ENCODE measurements at regions of chr19 and their contacts with region 1.

Region 1: GRCh38 chr19:14006243-14006765 is at the start of gene RFX1:
- DNase-seq: peak; percentile 100
- H3K4me3 Mint-ChIP-seq: peak within 1 kb of the TSS; percentile 96
- H3K27ac Mint-ChIP-seq: peak within 1 kb of the TSS; percentile 100
- H3K4me1 Mint-ChIP-seq: peaks cover 39% of the 10 kb centered on the region
- H3K27me3 Mint-ChIP-seq: no peaks in the 10 kb centered on the region
- total RNA-seq, gene RFX1: 17.0 and 18.0 TPM in 2 replicates

Region 2: DNA sequence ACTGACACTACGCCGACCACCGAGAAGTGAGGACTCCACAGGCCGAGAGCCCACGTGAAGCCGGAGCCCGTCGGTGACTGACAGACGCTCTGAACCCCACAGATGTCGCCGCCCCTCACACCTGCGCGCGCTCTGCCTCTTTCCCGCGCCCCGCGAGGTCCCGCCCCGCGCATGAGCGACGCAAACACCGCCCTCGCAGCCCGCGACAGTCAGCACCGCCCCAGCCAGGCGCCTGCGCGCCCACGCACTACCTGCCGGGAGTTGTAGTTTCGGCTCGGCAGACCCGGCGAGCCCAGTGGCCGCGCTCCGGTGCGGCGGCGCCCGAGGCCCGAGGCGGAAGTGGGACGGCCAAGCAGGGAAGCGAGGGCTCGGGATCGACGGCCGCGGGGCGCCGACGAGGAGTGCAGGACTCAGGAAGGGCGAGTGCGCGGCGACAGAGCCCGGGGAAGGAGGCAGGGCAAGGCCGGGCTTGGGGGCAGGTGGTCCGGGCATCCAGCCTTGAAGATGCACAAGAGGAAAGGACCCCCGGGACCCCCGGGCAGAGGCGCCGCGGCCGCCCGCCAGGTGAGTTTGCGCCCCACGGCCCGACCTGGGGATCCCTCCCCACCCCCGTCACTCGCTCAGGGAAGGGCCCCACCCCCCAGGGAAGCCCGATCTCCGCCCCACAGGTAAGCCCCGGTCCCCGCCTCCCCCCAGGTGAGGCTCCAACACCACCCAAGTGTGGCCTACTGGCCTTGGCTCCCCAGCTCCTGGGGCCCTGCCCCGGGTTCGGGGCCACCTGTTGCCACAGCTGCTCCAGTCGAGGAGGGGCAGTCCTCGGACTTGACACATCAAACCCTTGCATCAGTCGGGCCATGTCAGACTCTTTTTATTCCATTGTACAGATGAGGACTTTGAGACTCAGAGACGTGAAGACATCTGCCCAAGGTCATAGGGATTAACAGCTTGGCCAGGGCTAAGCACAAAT is 100.1 kb before region 1 on chr19 and contains the starts of genes BRME1 and CC2D1A:
- intact Hi-C with region 1: loop called (anchors 1 kb)
- DNase-seq: peak; percentile 99
- H3K4me3 Mint-ChIP-seq: peak within 1 kb of the TSS; percentile 84
- H3K27ac Mint-ChIP-seq: peak within 1 kb of the TSS; percentile 94
- H3K4me1 Mint-ChIP-seq: peaks cover 15% of the 10 kb centered on the region
- H3K27me3 Mint-ChIP-seq: no peaks in the 10 kb centered on the region
- total RNA-seq, gene BRME1: 16.2 and 18.6 TPM in 2 replicates
- total RNA-seq, gene CC2D1A: 38.5 and 39.4 TPM in 2 replicates

Region 3: DNA sequence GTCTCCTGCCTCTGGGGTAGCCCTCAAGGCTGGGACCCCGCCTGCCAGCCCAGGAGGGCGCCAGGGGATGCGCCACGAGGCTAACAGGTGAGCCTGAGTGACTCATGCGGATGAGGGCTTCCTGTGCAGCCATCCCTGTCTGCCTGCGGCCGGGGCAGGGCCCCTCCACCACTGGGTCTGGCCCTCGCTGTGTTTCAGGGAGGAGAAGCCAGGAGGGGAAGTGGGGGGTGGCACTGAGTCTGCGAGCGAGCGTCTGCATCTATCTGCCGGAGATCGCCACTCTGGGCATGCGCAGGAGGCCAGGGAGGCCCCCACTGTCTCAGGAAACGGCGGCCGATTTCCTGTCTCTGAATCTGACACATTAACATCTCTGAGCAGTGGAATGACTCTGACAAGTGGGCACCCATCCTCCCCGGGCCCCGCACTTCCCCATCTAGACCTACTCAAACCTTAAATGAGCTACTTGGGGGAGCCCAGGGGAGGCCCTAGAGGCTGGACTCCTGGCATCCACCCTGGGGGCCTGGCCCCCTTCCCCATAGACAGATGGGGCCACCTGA is 19.9 kb before region 1 on chr19:
- intact Hi-C with region 1: loop called (anchors 1 kb)
- DNase-seq: peak; percentile 99
- H3K4me3 Mint-ChIP-seq: peak overlapping the region; percentile 80
- H3K27ac Mint-ChIP-seq: peak overlapping the region; percentile 95
- H3K4me1 Mint-ChIP-seq: peaks cover 43% of the 10 kb centered on the region
- H3K27me3 Mint-ChIP-seq: no peaks in the 10 kb centered on the region

Region 4: DNA sequence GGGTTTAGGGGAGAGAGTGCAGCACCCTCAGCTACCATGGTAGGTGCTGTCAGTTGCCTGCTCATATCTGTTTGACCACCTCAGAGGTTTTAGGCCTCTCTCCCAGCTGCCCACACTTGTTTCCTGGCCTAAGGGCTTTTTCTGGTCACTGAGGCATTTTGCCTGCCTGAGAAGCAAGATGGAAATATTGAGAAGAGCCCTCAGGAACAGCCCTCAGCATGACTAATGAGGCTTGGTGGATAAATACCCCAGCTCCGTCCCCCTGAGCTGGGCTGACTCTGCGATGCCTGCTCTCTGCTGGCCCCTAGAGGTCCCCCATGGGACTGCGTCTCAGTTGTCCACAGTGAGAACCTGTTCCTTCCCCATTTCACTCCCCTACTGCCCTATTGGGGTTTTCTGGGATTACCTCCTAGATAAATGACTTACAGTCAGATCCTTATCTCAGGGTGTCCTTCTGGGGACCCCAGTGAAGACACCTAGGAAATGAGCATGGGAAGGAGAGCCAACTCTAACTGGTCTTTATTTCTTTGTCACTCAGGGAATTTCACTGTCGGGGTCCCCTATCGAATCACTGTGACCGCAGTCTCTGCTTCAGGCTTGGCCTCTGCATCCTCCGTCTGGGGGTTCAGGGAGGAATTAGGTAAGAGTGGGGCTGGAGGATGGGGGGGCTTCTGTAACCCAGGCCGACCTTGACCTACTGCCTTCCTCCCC is 42.3 kb after region 1 on chr19:
- intact Hi-C with region 1: loop called (anchors 5 kb)
- DNase-seq: peak; percentile 93
- H3K4me3 Mint-ChIP-seq: no peak overlapping the region
- H3K27ac Mint-ChIP-seq: peak overlapping the region; percentile 34
- H3K4me1 Mint-ChIP-seq: no peaks in the 10 kb centered on the region
- H3K27me3 Mint-ChIP-seq: no peaks in the 10 kb centered on the region

Region 5: GRCh38 chr19:14081325-14082093 is 75.2 kb after region 1 on chr19:
- intact Hi-C with region 1: loop called (anchors 2 kb)
- DNase-seq: peak; percentile 100
- H3K4me3 Mint-ChIP-seq: peak overlapping the region; percentile 96
- H3K27ac Mint-ChIP-seq: peak overlapping the region; percentile 93
- H3K4me1 Mint-ChIP-seq: peaks cover 19% of the 10 kb centered on the region
- H3K27me3 Mint-ChIP-seq: no peaks in the 10 kb centered on the region

Region 6: GRCh38 chr19:14147797-14148605 is 141.7 kb after region 1 on chr19:
- intact Hi-C with region 1: no loop called
- DNase-seq: peak; percentile 85
- H3K4me3 Mint-ChIP-seq: peak overlapping the region; percentile 83
- H3K27ac Mint-ChIP-seq: peak overlapping the region; percentile 85
- H3K4me1 Mint-ChIP-seq: peaks cover 30% of the 10 kb centered on the region
- H3K27me3 Mint-ChIP-seq: no peaks in the 10 kb centered on the region

Measured in activated CD4-positive, alpha-beta T cell treated with anti-CD3 and anti-CD28 coated beads, Interleukin-2, amount 10 ng/mL, durations not matched to agents 24 days and 14 days (primary cell).